HEK293 (cell line): ENCODE measurements at regions of chr6 and their contacts with region 1.

Region 1: GRCh38 chr6:161273752-161274487 is at the start of gene AGPAT4:
- H3K4me3 ChIP-seq: peak within 1 kb of the TSS; percentile 50
- H3K27ac ChIP-seq: peak within 1 kb of the TSS; percentile 37
- H3K4me1 ChIP-seq: peaks cover 9% of the 10 kb centered on the region; the same call in 1 of the 2 replicates
- CTCF ChIP-seq: no peak

Region 2: DNA sequence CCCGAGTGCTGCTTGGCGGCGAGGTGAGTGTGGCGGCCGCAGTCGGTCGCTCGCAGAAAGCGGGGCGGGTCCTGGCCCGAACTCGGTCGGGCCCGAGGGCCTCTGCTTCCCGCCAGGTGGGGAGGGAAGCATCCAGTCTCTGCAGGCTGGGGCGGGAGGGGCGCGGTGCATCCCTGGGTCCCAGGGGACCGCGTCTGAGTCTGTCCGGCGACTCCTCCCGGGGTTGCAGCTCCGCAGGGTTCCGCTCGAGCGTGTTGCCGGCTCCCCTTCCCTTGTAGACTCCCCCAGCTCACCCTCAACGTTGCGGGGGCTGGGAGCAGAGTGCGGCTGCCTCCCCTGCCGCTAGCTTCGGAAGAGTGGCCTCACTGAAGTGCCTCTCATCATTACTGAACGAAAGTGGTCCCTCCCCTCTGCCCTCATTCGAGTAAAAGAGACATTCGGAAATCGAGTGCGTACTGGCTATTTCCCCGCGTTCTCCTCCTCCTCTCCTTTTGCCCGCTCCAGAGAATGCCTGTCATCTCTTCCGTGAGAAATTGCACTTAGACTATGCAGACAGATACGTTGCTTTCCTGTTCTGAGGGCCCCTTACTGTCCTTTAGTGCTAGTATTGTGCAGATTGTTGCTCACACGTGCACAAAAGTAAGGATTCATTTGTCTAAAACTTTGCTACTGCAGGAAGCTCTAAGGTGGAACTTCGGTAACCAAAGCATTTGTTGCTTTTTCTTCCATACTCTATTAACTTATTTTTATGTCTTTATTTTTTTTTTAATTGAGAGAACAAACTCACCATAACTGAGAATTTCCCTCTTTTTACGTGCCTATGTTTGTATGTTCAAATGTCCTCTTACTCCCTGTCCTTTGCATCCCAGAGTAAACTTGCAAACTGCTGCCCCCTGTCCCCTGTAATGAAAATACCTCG is 281.6 kb before region 1 on chr6:
- CTCF ChIA-PET with region 1: interaction called, 4 read pairs
- POLR2A ChIA-PET with region 1: interaction called, 20 read pairs
- H3K4me3 ChIP-seq: peak overlapping the region; percentile 99
- H3K27ac ChIP-seq: peak overlapping the region; percentile 93
- H3K4me1 ChIP-seq: peaks cover 5% of the 10 kb centered on the region
- CTCF ChIP-seq: peak; percentile 60

Region 3: GRCh38 chr6:161139766-161140553 is 134.0 kb before region 1 on chr6:
- CTCF ChIA-PET with region 1: no interaction called
- POLR2A ChIA-PET with region 1: no interaction called
- H3K4me3 ChIP-seq: no peak overlapping the region
- H3K27ac ChIP-seq: no peak overlapping the region
- H3K4me1 ChIP-seq: no peaks in the 10 kb centered on the region
- CTCF ChIP-seq: no peak

Region 4: DNA sequence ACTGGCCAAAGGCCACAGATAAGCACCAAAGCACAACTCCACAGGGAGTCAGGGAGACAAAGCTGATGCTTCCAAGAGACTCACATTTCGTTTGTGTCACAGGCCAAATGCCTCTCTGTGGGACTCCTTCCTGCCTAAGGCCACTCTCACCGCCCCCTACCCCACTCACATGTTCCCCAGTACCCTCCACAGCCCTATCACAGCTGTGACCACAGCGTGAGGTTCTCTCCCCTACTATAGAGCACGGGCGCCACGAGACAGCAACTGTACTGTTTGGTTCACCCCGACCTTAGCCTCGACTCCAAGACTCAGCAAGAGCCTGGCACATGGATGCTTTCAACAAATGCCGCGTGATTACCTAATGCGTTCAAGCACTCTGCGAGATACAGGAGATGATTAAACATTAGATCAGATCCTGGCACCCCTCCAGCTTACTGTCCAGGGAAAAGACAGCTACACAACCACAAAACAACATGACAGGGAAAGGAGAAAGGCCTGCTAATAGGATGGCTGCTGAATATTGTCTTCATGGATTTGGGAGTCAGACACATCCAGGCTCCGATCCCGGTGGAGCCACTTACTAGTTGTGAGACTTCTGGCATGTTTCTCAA is 105.5 kb before region 1 on chr6:
- CTCF ChIA-PET with region 1: no interaction called
- POLR2A ChIA-PET with region 1: interaction called, 12 read pairs
- H3K4me3 ChIP-seq: no peak overlapping the region
- H3K27ac ChIP-seq: no peak overlapping the region
- H3K4me1 ChIP-seq: peaks cover 3% of the 10 kb centered on the region; the same call in 1 of the 2 replicates
- CTCF ChIP-seq: no peak

Region 5: GRCh38 chr6:161211380-161212035 is 62.4 kb before region 1 on chr6:
- CTCF ChIA-PET with region 1: no interaction called
- POLR2A ChIA-PET with region 1: no interaction called
- H3K4me3 ChIP-seq: no peak overlapping the region
- H3K27ac ChIP-seq: no peak overlapping the region
- H3K4me1 ChIP-seq: no peaks in the 10 kb centered on the region
- CTCF ChIP-seq: no peak

Region 6: DNA sequence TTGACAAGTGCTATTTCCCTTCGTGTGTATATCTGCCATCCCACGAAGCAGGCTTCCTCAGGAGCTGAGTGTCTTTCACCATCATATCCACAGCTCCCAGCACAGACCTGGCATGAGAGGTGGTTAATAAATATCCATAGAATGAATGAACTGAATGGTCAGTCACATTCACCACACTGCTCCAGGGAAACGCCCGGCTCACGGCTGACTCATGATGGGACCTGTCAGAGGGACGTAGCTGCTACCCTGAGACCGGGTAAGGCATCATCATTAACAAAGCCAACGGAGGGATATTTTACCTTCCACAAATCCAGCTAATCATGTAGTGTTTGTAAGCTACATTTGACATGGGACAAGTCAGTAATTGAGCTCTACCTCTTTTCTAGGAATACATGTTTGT is 12.6 kb before region 1 on chr6:
- CTCF ChIA-PET with region 1: interaction called, 4 read pairs
- POLR2A ChIA-PET with region 1: interaction called, 14 read pairs
- H3K4me3 ChIP-seq: no peak overlapping the region
- H3K27ac ChIP-seq: no peak overlapping the region
- H3K4me1 ChIP-seq: no peaks in the 10 kb centered on the region
- CTCF ChIP-seq: no peak

Region 7: GRCh38 chr6:161922631-161923119 is 648.8 kb after region 1 on chr6:
- CTCF ChIA-PET with region 1: no interaction called
- POLR2A ChIA-PET with region 1: no interaction called
- H3K4me3 ChIP-seq: no peak overlapping the region
- H3K27ac ChIP-seq: no peak overlapping the region
- H3K4me1 ChIP-seq: peaks cover 3% of the 10 kb centered on the region; the same call in 1 of the 2 replicates
- CTCF ChIP-seq: no peak